Breast epithelium (tissue), 4 donors: ENCODE measurements at regions of chr4 and their contacts with region 1.

Region 1: DNA sequence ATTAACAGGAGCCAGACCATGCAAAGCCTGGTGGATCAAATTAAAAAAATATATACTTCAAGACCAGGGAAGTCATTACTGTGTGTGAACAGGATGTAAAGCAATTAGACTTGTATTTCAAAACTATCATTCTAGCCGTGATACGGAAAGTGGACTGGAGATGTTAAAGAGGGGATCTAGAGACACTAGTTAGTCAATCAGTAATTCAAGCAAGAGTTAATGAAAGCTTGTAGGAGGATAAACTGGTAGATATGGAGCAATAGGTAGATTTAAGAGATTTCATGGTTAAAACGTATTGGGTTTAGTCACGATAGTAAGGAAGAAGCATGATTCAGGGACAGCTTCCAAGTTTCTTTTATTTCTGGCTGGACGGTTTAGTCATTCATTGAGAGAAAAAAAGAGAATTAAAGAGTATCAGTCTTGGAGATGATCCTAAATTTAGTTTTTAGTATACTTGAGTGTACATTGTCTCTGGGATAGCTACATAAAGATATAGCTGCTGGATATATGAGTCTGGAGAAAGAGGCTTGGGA is 3.9 kb downstream of the MAD2L1 start:
- DNase-seq: no peak
- H3K4me3 ChIP-seq: no peak overlapping the region
- H3K27ac ChIP-seq: no peak overlapping the region
- H3K4me1 ChIP-seq: no peaks in the 10 kb centered on the region
- H3K27me3 ChIP-seq: no peaks in the 10 kb centered on the region
- CTCF ChIP-seq: no peak
- POLR2A ChIP-seq: no peak

Region 2: DNA sequence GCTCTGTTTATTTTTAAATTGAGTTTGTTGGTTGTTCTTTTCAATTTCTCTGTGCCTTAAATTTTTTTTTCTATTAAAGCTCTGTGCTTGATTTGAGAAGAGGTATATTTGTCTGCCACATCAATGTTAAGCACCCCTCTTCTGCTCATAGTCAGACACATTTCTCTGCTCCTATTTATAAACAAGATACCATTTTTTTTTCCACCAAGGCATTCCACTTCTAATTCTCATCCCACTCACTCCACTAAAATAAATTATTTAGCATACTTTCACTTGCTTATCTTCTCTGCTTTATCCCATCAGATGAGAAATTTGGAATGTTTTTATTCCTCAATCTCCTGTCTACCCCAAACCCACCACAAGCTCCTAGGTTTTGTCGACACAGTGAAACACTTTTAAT is 307.1 kb before region 1 on chr4:
- intact Hi-C with region 1: loop called (anchors 5 kb)
- DNase-seq: no peak
- H3K4me3 ChIP-seq: no peak overlapping the region
- H3K27ac ChIP-seq: no peak overlapping the region
- H3K4me1 ChIP-seq: no peaks in the 10 kb centered on the region
- H3K27me3 ChIP-seq: no peaks in the 10 kb centered on the region
- CTCF ChIP-seq: no peak
- POLR2A ChIP-seq: no peak